ENCODE measurements at regions of chr12 and their contacts with region 1.

Region 1: DNA sequence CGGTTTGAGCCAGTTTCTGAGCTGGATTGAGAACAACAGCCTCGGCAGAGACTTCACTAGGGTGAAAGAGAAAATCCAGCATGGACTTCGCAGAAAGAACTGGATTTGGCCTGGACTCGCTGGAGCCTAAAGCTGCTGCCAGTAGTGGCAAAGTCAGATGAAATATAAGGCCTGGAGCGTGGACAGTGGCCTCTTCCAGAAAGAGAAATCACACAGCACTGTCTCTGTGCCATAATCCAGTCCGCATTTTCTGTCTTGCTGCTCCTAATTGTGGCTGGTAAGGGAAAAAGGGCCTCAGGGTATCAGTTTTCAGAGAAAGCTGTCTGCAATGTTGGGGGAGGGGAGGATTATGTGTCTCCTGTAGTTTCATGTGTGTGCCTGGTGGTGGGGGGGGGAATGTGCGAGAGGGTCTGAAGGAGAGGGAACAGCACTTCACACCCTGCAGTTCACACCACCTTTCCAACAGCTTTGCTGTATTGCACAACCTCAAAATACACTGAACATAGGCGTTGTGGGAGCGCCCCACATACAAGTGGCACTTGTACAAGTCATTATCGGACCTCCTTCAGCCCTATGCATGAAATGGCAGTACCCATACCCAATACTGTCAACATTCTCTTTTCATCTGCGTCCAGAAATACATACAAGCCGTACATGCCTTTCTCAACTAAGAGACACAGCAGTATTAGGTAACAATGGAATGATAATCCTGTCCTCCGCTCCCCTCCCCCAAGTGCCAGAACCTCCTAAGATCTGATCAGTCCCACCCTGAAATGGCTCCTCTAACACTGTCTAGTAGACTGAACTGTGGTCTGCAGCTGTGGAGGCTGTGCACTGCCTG is 107.5 kb upstream of the ATF7IP start:
- DNase-seq: peak; percentile 95
- H3K4me3 Mint-ChIP-seq: peak overlapping the region; percentile 24
- H3K27ac Mint-ChIP-seq: peak overlapping the region; percentile 95
- H3K4me1 Mint-ChIP-seq: peaks cover 64% of the 10 kb centered on the region
- H3K27me3 Mint-ChIP-seq: no peaks in the 10 kb centered on the region
- CTCF ChIP-seq: no peak

Region 2: GRCh38 chr12:13962699-13963098 is 295.3 kb before region 1 on chr12:
- CTCF ChIA-PET with region 1: no interaction called
- intact Hi-C with region 1: no loop called
- DNase-seq: peak; percentile 42
- H3K4me3 Mint-ChIP-seq: no peak overlapping the region
- H3K27ac Mint-ChIP-seq: no peak overlapping the region
- H3K4me1 Mint-ChIP-seq: peaks cover 7% of the 10 kb centered on the region
- H3K27me3 Mint-ChIP-seq: peaks cover 98% of the 10 kb centered on the region
- CTCF ChIP-seq: peak; percentile 38

Region 3: GRCh38 chr12:14185427-14186192 is 72.3 kb before region 1 on chr12:
- CTCF ChIA-PET with region 1: no interaction called
- intact Hi-C with region 1: no loop called
- DNase-seq: peak; percentile 47
- H3K4me3 Mint-ChIP-seq: no peak overlapping the region
- H3K27ac Mint-ChIP-seq: no peak overlapping the region
- H3K4me1 Mint-ChIP-seq: peaks cover 28% of the 10 kb centered on the region
- H3K27me3 Mint-ChIP-seq: no peaks in the 10 kb centered on the region
- CTCF ChIP-seq: peak; percentile 44

Region 4: GRCh38 chr12:14394317-14395073 is 136.5 kb after region 1 on chr12:
- CTCF ChIA-PET with region 1: interaction called, 3 read pairs
- intact Hi-C with region 1: loop called (anchors 2 kb)
- DNase-seq: peak; percentile 29
- H3K4me3 Mint-ChIP-seq: peak overlapping the region; percentile 12
- H3K27ac Mint-ChIP-seq: peak overlapping the region; percentile 63
- H3K4me1 Mint-ChIP-seq: peaks cover 32% of the 10 kb centered on the region
- H3K27me3 Mint-ChIP-seq: no peaks in the 10 kb centered on the region
- CTCF ChIP-seq: no peak

Region 5: DNA sequence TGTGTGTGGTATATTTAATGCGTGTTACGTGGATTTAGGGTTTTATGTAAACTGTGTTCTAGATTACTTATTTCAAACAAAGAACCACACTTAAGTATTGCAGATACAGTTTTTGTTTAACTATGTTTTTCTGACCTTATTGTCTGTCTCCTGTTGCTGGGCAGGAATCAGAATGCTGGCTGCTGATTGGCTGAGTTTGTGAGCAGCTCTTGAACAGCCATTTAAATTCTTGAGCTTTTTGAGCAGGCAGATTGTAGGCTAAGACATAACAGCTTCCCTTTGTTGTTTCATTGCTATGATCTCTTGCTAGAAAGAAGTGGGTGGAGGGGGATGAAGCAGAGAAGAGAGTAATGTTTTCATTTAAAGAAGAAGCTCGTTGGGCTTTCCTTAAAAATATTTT is 159.8 kb after region 1 on chr12:
- CTCF ChIA-PET with region 1: no interaction called
- intact Hi-C with region 1: loop called (anchors 5 kb)
- DNase-seq: peak; percentile 70
- H3K4me3 Mint-ChIP-seq: peak overlapping the region; percentile 43
- H3K27ac Mint-ChIP-seq: peak overlapping the region; percentile 77
- H3K4me1 Mint-ChIP-seq: peaks cover 8% of the 10 kb centered on the region
- H3K27me3 Mint-ChIP-seq: no peaks in the 10 kb centered on the region
- CTCF ChIP-seq: no peak